Right ventricle myocardium superior (tissue), 1 donor: ENCODE measurements at regions of chr16 and their contacts with region 1.

Region 1: DNA sequence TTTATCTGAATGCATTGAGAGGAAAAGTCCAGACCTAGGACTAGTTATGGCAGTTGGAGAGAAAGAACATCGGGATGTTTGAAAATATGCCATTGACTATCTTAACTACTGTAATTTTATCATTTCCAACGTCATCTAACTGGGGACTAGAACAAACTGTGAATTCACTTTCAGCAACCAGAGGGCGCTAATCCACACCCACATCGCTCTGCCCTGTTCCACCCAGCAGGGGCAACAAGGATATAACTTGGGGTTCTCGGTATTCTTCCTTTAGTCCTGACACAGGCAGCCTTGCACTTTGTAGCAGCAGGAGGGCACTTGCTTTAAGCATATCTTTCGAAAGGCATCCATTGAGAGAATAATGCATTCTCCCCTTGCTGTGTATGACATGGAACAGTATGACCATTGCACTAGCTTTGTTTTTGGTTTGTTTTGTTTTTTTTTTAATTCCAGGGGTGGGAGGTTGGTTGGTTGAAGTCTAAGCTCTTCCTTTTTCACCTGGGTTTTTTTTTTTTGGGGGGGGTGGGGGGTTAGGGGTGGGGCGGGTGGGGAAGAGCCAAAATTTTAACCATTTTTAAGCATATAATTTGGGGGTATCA is 31.5 kb downstream of the SIAH1 start:
- DNase-seq: peak; percentile 55
- ATAC-seq: peak; percentile 83

Region 2: DNA sequence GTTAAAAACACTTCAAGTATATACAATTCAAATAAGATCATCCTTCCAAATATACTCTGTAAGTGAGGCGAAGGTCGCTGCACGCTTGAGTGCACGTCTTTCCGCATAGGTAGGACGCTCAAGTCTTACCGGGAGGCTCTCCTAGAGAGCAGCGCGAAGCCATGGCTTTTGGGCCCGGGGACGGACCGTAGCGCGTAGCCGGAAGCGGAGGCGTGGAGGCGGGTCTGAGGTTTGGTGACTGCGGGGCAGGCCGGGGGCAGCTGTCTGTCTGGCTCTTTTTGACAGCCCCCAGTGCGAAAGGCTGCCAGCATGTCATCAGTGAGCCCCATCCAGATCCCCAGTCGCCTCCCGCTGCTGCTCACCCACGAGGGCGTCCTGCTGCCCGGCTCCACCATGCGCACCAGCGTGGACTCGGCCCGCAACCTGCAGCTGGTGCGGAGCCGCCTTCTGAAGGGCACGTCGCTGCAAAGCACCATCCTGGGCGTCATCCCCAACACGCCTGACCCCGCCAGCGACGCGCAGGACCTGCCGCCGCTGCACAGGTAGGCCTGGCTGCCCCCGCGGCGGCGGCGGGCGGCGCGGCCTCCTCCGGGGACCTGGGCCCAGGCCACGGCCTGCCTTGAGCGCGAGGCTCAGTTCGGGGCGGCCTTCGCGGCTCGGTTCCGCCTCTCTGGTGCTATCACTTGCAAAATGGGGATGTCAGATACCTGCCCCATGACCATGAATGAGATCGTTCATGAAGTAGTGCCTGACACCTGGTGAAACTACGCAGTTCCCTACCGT is 109.4 kb before region 1 on chr16 and contains the start of gene LONP2:
- intact Hi-C with region 1: no loop called
- DNase-seq: peak; percentile 95
- ATAC-seq: peak; percentile 100
- total RNA-seq, gene LONP2: 58.6 TPM

Region 3: DNA sequence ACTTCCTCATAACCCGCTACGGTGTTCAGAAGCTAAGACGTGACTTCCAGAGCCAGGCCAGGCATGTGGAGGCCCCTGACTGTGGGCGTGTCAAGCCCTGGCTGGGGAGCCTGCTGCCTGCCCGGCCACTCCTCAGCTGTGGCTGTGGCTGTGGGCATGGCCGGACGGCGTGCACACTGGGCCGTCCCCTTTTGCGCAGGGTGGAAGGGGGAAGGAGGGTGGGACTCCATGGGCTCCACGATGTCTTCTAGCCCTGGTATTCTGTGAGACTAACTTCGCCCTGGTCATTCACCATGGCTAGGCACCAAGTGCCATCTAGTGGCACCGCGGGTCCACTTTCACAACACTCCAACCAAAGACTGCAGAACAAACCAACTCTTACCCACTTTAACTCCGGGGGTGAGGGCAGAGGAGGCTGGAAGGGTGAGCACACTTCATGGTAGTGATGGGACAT is 188.4 kb after region 1 on chr16:
- intact Hi-C with region 1: loop called (anchors 5 kb)
- DNase-seq: peak; percentile 71
- ATAC-seq: peak; percentile 71